ENCODE measurements at regions of chr10 and their contacts with region 1.

Region 1: DNA sequence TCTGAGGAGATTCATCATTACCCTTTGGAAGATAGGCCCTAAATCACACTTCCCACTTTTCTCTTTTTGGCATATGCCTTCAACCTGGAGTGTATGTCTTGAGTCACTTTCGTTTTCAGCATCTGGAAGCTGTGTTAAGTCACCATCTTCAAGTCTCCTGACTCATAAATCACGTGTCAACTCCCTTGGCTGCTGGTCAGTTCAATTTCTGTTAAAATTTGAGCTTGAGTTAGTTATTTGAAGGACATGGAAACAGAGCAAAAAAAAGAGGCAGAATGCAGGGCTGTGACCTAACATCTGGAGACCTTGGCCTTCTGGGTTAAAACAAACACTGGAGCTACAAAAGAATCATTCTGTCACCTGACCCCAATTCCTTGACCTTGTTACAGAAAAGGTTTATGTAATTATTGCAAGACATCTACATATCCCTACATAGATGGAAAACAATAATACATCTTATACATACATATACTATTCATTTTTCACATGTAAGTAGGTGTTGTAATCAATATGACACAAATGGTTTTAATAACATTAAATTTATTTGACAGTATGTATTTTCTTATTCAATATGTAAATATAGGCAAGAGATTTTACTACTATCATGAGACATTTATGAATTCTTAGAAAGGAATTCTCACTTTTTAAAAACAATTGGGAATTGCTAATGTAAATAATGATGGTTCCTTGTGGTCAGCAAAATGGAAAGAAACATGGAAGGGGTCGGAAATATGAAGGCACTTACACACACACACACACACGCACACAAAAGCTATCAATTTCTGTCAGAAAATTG is 169.7 kb upstream of the PHYHIPL start:
- DNase-seq: no peak
- H3K4me3 ChIP-seq: no peak overlapping the region
- H3K4me3 Mint-ChIP-seq: peak overlapping the region; percentile 2
- H3K27ac Mint-ChIP-seq: peak overlapping the region; percentile 68
- H3K4me1 ChIP-seq: peaks cover 76% of the 10 kb centered on the region
- H3K4me1 Mint-ChIP-seq: peaks cover 55% of the 10 kb centered on the region
- H3K27me3 ChIP-seq: no peaks in the 10 kb centered on the region
- H3K27me3 Mint-ChIP-seq: no peaks in the 10 kb centered on the region
- CTCF ChIP-seq: no peak

Region 2: GRCh38 chr10:58967551-58968388 is 38.9 kb before region 1 on chr10:
- CTCF ChIA-PET with region 1: no interaction called
- POLR2A ChIA-PET with region 1: no interaction called
- intact Hi-C with region 1: loop called (anchors 2 kb)
- DNase-seq: peak; percentile 89 to 92
- H3K4me3 ChIP-seq: no peak overlapping the region
- H3K4me3 Mint-ChIP-seq: peak overlapping the region; percentile 20
- H3K27ac Mint-ChIP-seq: peak overlapping the region; percentile 14
- H3K4me1 ChIP-seq: peaks cover 31% of the 10 kb centered on the region
- H3K4me1 Mint-ChIP-seq: peaks cover 47% of the 10 kb centered on the region
- H3K27me3 ChIP-seq: no peaks in the 10 kb centered on the region
- H3K27me3 Mint-ChIP-seq: no peaks in the 10 kb centered on the region
- CTCF ChIP-seq: no peak

Region 3: DNA sequence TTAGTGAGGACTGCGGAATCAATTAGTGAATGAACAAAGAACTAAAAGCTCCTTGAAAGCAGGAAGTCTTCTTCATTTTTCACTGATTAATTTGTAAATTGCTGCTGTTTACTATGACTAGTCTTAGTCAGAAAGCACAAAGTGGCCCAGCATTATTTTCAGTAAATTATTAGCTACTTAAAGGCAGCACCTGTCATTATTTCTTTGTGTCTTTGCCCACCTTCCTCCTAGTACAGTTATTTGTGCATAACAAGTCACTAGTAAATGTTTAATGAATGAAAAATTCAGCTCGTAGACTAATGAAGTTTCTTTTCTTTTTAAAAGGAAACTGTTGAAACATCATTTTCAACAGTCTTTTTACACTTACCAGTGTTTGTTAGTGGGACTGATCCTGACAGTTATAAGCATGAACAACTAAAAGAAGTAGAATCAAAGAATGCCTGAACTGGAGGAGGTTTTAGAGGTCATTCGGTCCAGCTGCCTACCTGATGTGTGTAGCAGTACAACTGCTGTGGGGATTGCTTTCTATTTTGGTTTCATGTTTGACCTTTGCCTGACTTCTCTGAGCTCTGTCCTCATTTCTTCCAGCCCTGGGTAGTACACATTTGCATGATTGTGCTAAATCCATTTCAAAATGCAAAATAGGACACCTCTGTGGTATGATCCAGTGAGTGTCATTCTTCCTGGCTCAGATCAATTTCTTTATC is 29.8 kb after region 1 on chr10:
- CTCF ChIA-PET with region 1: no interaction called
- POLR2A ChIA-PET with region 1: no interaction called
- intact Hi-C with region 1: loop called (anchors 2 kb)
- DNase-seq: no peak
- H3K4me3 ChIP-seq: no peak overlapping the region
- H3K4me3 Mint-ChIP-seq: no peak overlapping the region
- H3K27ac Mint-ChIP-seq: no peak overlapping the region
- H3K4me1 ChIP-seq: peaks cover 15% of the 10 kb centered on the region
- H3K4me1 Mint-ChIP-seq: peaks cover 31% of the 10 kb centered on the region
- H3K27me3 ChIP-seq: no peaks in the 10 kb centered on the region
- H3K27me3 Mint-ChIP-seq: no peaks in the 10 kb centered on the region
- CTCF ChIP-seq: no peak